ENCODE measurements at regions of chr12 and their contacts with region 1.

Region 1: GRCh38 chr12:64679487-64679983 is 69.2 kb downstream of the RASSF3 start:
- DNase-seq: peak; percentile 72
- H3K4me3 Mint-ChIP-seq: peak overlapping the region; percentile 53
- H3K27ac Mint-ChIP-seq: peak overlapping the region; percentile 89
- H3K4me1 Mint-ChIP-seq: peaks cover 95% of the 10 kb centered on the region
- H3K27me3 Mint-ChIP-seq: no peaks in the 10 kb centered on the region

Region 2: GRCh38 chr12:64222009-64222765 is 457.3 kb before region 1 on chr12 and contains the start of gene KICS2:
- CTCF ChIA-PET with region 1: no interaction called
- intact Hi-C with region 1: loop called (anchors 5 kb)
- DNase-seq: peak; percentile 92
- H3K4me3 Mint-ChIP-seq: peak within 1 kb of the TSS; percentile 92
- H3K27ac Mint-ChIP-seq: peak within 1 kb of the TSS; percentile 91
- H3K4me1 Mint-ChIP-seq: peaks cover 26% of the 10 kb centered on the region
- H3K27me3 Mint-ChIP-seq: no peaks in the 10 kb centered on the region
- total RNA-seq, gene KICS2: 13.3 to 15.6 TPM

Region 3: DNA sequence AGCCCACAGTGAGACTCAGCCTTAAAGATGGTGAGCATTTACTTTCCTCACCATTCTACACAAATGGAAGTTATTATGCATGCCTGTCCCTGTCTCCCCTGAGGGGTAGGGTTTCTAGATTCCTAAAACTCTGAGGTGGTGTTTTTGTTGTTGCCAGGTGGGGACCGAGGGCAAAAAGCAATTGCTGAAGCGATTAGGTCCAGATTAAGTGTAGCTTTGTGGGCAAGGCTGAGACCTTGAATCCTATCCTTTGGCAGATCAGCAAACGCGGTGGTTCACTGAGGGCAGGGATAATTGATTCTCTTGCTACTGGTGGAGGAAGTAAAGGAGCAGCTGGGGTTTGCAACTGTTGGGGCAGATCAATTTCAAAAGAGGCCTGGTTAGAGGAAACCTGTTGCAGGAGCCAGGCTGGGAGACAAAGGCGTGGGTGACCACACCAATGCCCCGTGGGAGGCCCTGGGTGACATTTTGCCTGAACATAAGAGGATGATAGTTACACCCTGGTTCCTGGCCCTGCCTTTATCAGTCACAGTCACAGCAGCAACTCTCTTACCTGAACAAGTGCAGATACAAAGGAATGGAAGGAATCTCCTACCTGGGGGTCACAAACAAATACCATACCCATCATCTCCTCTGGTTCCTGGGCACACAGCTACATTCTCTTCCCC is 112.7 kb before region 1 on chr12:
- CTCF ChIA-PET with region 1: no interaction called
- intact Hi-C with region 1: no loop called
- DNase-seq: no peak
- H3K4me3 Mint-ChIP-seq: no peak overlapping the region
- H3K27ac Mint-ChIP-seq: no peak overlapping the region
- H3K4me1 Mint-ChIP-seq: peaks cover 29% of the 10 kb centered on the region
- H3K27me3 Mint-ChIP-seq: no peaks in the 10 kb centered on the region

Region 4: DNA sequence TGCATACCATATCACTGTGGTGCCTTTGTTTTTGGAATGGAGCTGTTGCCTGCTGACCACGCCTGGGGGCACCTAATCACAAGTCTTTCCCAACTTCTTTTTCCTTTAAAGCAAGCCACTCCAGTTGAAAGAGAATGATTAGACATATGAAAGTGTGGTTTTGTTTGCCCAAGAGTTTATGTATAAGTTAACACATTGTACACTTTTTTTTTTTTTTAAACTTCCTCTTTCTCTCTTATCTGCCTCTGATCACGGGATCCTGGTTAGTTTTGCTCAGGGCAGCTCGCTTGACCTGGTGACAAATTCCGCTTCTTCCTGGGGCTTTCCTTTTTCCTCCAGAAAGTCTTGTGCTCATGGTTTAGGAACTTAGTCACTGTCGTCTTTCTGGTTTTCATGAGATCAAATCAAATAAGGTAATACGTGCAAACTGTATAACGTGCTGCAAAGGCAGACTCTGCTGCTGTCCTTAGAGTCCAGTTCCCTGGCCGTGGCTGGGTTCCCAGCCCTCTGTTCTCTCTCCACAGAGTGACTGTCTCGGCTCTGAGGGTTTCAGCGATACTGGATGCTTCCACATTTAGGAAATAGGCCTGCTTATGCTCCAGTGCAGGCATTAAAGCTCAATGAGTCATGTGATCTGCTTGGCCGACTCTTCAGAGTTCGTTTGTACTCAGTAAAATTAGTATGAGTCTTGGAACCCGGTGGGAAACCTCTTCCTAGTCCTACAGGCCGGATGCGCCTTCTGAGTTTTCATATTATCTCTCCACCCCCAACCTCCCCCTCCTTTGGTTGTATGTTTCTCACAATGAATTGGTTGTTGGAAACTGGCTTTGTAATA is 54.1 kb before region 1 on chr12:
- CTCF ChIA-PET with region 1: no interaction called
- intact Hi-C with region 1: loop called (anchors 1 kb)
- DNase-seq: peak; percentile 62
- H3K4me3 Mint-ChIP-seq: peak overlapping the region; percentile 57
- H3K27ac Mint-ChIP-seq: peak overlapping the region; percentile 86
- H3K4me1 Mint-ChIP-seq: peaks cover 69% of the 10 kb centered on the region
- H3K27me3 Mint-ChIP-seq: no peaks in the 10 kb centered on the region

Region 5: GRCh38 chr12:64656429-64656828 is 23.1 kb before region 1 on chr12:
- CTCF ChIA-PET with region 1: interaction called, 5 read pairs
- intact Hi-C with region 1: loop called (anchors 1 kb)
- DNase-seq: no peak
- H3K4me3 Mint-ChIP-seq: no peak overlapping the region
- H3K27ac Mint-ChIP-seq: peak overlapping the region; percentile 51
- H3K4me1 Mint-ChIP-seq: peaks cover 80% of the 10 kb centered on the region
- H3K27me3 Mint-ChIP-seq: no peaks in the 10 kb centered on the region

Region 6: DNA sequence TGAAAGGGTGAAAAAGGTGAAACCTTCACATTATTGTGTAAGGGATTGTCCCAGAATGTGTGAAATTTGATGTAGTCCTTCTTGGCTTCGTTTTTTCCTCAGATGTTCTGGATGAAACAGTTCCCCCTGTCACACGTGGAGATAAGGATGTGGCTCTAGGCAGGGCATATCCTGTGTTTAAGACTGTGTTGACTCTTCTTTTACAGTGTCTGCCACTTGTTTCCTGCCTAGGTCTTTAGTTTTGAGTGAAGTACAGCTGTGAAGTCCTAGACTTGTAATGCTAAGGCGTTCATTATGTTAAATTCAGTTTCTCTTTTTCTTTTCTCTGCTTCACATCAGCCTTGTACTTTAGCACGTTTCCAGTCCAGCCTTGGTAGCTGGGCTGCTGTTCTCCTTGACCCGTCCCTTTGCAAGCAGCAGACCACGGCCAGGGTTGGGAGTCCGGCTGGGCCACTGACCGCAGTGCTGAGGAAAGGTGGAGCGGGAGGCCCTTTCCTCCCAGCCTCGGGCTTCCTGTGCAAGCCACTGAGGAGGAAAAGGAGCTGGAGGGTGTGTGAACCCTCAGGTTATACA is 10.2 kb before region 1 on chr12:
- CTCF ChIA-PET with region 1: interaction called, 13 read pairs
- intact Hi-C with region 1: loop called (anchors 1 kb)
- DNase-seq: peak; percentile 63
- H3K4me3 Mint-ChIP-seq: peak overlapping the region; percentile 78
- H3K27ac Mint-ChIP-seq: peak overlapping the region; percentile 92
- H3K4me1 Mint-ChIP-seq: peaks cover 93% of the 10 kb centered on the region
- H3K27me3 Mint-ChIP-seq: no peaks in the 10 kb centered on the region

Measured in activated naive CD4-positive, alpha-beta T cell treated with anti-CD3 and anti-CD28 coated beads for 36 hours (primary cell).